ENCODE measurements at regions of chr16 and their contacts with region 1.

Region 1: GRCh38 chr16:58025351-58026138 is at the start of gene MMP15:
- DNase-seq: peak; percentile 73 to 88 (median 78)
- ATAC-seq: peak; percentile 32 to 67 (median 56)
- H3K4me3 ChIP-seq: peak within 1 kb of the TSS; percentile 60 to 96 (median 88)
- H3K27ac ChIP-seq: peak within 1 kb of the TSS; percentile 75 to 99 (median 95)
- H3K4me1 ChIP-seq: peaks cover 17 to 91% (median 67%) of the 10 kb centered on the region in 12 donors
- H3K27me3 ChIP-seq: peaks cover 0 to 25% (median 0%) of the 10 kb centered on the region in 9 donors
- CTCF ChIP-seq: no peak
- POLR2A ChIP-seq: peak in 1 of 2 donors; percentile 69
- total RNA-seq, gene MMP15: 24.2 to 84.7 (median 60.9) TPM

Region 2: DNA sequence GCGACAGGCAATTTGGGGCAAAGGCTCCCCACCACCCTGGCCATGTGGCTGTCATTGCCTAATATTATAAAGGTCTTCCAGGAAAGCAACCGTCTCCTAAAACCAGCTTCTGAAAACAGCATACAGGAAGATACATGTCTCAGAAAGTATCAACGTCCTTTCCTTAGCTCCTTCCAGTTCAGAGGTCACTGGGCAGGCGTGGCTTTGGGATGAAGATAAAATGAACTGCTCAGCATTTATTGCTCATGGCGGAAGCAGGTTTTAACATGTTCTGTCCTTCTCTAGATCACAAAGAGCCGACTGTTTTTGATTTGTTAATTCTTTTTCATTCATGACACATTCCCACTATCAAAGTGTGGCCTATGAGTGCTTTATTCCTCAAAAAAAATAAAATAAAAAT is 95.6 kb after region 1 on chr16:
- intact Hi-C with region 1: loop called (anchors 1 to 2 kb)
- DNase-seq: no peak
- ATAC-seq: no peak
- H3K4me3 ChIP-seq: peak overlapping the region in 1 of 12 donors; percentile 8
- H3K27ac ChIP-seq: peak overlapping the region in 10 of 12 donors; percentile 24 to 74 (median 46)
- H3K4me1 ChIP-seq: peaks cover 12 to 97% (median 78%) of the 10 kb centered on the region in 12 donors
- H3K27me3 ChIP-seq: no peaks in the 10 kb centered on the region
- CTCF ChIP-seq: no peak
- POLR2A ChIP-seq: no peak

Region 3: DNA sequence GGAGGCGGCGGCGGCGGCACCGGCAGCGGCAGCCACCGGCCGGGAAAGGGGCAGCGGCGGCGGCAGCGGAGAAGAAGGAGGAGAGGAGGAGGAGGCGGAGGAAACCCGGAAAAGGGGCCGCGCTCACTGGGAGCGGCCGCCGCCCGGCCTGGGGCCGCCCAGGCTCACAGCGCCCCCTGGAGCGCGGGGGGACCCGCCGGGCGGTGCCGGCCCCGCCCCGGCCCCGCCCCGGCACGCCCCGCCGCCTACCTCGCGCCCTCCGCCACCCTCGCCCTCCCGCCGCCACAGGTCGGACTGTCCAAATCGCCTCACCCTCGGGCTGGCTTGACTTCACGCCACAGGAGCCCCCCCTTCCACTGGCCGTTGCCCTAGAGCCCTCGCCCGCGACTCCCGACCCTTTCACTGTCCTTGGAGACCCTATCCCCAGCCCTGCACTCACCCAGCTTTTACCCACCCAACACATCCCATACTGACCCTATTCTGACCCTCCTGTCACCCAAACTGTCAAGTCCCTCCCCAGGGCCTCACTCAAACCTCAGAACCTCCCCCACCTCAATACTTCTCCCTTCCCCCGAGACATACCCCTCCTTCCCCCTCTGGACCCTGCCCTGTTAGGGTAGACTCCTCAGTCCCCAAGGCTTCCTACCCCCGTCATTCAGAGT is 172.6 kb after region 1 on chr16 and contains the start of gene CSNK2A2:
- intact Hi-C with region 1: loop called in 4 of 10 experiments (anchors 5 to 10 kb)
- DNase-seq: peak; percentile 76 to 87 (median 81)
- ATAC-seq: peak; percentile 40 to 96 (median 90)
- H3K4me3 ChIP-seq: peak within 1 kb of the TSS; percentile 65 to 94 (median 88)
- H3K27ac ChIP-seq: peak within 1 kb of the TSS in 8 of 12 donors; percentile 31 to 76 (median 50)
- H3K4me1 ChIP-seq: peaks cover 0 to 35% (median 16%) of the 10 kb centered on the region in 12 donors
- H3K27me3 ChIP-seq: no peaks in the 10 kb centered on the region
- CTCF ChIP-seq: peak in 10 of 12 donors; percentile 15 to 66 (median 47)
- POLR2A ChIP-seq: no peak
- total RNA-seq, gene CSNK2A2: 25.6 to 48.4 (median 40.0) TPM

Region 4: GRCh38 chr16:58317608-58318152 is 292.1 kb after region 1 on chr16:
- intact Hi-C with region 1: loop called in 1 of 10 experiments (anchors 10 kb)
- DNase-seq: peak in 1 of 5 donors; percentile 25
- ATAC-seq: peak in 2 of 4 donors; percentile 43 to 62
- H3K4me3 ChIP-seq: no peak overlapping the region
- H3K27ac ChIP-seq: peak overlapping the region; percentile 18 to 83 (median 60)
- H3K4me1 ChIP-seq: peaks cover 0 to 25% (median 6%) of the 10 kb centered on the region in 12 donors
- H3K27me3 ChIP-seq: no peaks in the 10 kb centered on the region
- CTCF ChIP-seq: no peak
- POLR2A ChIP-seq: no peak